ENCODE measurements at regions of chr2 and their contacts with region 1.

Region 1: GRCh38 chr2:218229239-218229638 is 12.2 kb downstream of the ARPC2 start:
- DNase-seq: peak; percentile 72
- H3K4me3 ChIP-seq: peak overlapping the region; percentile 9
- H3K27ac ChIP-seq: peak overlapping the region; percentile 83
- H3K4me1 ChIP-seq: peaks cover 52% of the 10 kb centered on the region
- CTCF ChIP-seq: no peak

Region 2: GRCh38 chr2:216388046-216388884 is 1841.0 kb before region 1 on chr2:
- CTCF ChIA-PET with region 1: no interaction called
- POLR2A ChIA-PET with region 1: no interaction called
- intact Hi-C with region 1: no loop called
- DNase-seq: no peak
- H3K4me3 ChIP-seq: no peak overlapping the region
- H3K27ac ChIP-seq: no peak overlapping the region
- H3K4me1 ChIP-seq: no peaks in the 10 kb centered on the region
- CTCF ChIP-seq: no peak

Region 3: DNA sequence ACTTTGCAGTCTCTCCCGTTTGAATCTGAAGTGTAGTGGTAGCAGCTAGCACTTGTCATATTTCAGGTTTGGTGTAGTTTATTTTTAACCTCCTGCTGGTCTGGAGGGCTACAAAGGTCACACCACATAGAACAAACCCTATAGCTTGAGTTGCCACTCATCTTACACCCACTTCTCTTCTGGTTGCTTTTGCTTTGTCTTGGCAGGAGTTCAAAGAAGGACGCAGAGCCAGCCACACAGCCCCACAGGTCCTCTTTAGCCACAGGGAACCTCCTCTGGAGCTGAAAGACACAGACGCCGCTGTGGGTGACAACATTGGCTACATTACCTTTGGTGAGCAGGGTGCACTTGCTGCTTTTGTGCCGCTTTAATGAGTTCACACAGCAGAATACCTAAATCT is 16.0 kb after region 1 on chr2:
- CTCF ChIA-PET with region 1: no interaction called
- POLR2A ChIA-PET with region 1: interaction called, 13 read pairs
- intact Hi-C with region 1: no loop called
- DNase-seq: no peak
- H3K4me3 ChIP-seq: no peak overlapping the region
- H3K27ac ChIP-seq: no peak overlapping the region
- H3K4me1 ChIP-seq: no peaks in the 10 kb centered on the region
- CTCF ChIP-seq: no peak